ENCODE measurements at regions of chr1 and their contacts with region 1.

Region 1: DNA sequence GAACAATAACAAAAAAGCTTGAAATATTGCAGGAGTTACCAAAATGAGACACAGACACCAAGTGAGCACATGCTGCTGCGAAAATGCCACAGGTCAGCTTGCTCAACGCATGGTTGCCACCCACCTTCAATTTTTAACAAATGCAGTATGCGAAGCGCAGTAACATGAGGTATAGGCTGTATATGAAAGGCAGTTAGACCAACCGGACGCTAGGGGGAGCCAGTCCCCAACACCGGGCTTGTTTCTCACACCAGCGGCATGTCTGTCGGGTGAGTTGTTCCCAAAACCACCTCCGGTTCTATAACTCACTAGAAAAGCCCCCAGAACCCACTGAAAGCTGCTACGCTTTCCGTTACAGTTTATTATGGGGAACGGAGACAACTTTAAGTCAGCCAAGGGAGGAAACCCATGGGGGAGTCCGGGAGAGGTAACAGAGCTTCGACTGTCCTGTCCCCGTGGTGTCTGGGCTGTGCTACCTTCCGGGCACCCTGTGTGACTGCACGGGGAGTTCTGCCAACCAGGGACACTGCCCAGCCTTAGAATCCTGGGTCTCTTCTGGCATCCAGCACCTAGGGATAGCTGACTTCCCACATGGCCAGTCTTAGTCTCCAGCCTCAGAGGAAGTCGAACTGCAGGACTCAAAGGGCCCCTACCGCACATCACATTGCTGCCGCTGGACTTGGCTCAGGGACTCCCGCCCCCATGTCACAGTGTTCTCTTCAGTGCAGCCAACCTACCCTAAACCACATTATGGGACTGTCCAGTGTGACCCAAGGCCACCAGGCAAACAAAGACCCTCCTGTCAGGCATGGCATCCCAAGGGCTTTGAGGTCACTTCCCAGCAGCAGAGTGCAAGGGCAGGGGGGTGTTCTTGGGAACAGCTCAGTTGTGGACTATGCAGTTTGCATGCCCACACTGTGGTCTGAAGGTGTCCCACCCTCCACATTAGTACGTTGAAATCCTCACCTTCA is 14.0 kb downstream of the RNF187 start:
- DNase-seq: peak; percentile 72
- ATAC-seq: peak; percentile 96
- H3K4me3 Mint-ChIP-seq: peak overlapping the region; percentile 77
- H3K27ac Mint-ChIP-seq: peak overlapping the region; percentile 84
- H3K4me1 Mint-ChIP-seq: peaks cover 17% of the 10 kb centered on the region
- H3K27me3 Mint-ChIP-seq: peaks cover 9% of the 10 kb centered on the region
- CTCF ChIP-seq: peak; percentile 91

Region 2: DNA sequence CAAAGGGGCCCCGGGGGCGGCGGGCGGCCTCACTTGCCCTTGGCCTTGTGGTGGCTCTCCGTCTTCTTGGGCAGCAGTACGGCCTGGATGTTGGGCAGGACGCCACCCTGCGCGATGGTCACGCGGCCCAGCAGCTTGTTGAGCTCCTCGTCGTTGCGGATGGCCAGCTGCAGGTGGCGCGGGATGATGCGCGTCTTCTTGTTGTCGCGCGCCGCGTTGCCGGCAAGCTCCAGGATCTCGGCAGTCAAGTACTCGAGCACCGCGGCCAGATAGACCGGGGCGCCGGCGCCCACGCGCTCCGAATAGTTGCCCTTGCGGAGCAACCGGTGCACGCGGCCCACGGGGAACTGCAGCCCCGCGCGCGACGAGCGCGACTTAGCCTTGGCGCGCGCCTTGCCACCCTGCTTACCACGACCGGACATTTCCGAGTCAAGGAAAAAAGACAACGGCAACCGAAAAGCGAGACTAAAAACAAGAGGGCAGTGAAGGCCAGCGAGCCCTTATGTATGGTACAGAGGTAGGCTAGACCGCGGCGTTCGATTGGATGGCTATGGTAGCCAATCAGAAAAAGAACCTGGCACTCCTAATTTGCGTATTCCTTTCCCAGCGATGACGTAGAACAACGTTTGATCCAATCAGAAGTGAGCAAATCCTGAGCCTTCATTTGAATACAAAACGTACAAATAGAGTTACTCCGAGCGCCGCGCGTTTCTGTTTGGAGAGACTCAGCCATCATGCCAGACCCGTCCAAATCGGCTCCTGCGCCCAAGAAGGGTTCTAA is 43.6 kb before region 1 on chr1:
- CTCF ChIA-PET with region 1: no interaction called
- POLR2A ChIA-PET with region 1: interaction called, 6 read pairs
- intact Hi-C with region 1: loop called (anchors 2 kb)
- DNase-seq: peak; percentile 53
- ATAC-seq: peak; percentile 85
- H3K4me3 Mint-ChIP-seq: peak overlapping the region; percentile 89
- H3K27ac Mint-ChIP-seq: peak overlapping the region; percentile 89
- H3K4me1 Mint-ChIP-seq: peaks cover 25% of the 10 kb centered on the region
- H3K27me3 Mint-ChIP-seq: peaks cover 26% of the 10 kb centered on the region
- CTCF ChIP-seq: no peak

Region 3: DNA sequence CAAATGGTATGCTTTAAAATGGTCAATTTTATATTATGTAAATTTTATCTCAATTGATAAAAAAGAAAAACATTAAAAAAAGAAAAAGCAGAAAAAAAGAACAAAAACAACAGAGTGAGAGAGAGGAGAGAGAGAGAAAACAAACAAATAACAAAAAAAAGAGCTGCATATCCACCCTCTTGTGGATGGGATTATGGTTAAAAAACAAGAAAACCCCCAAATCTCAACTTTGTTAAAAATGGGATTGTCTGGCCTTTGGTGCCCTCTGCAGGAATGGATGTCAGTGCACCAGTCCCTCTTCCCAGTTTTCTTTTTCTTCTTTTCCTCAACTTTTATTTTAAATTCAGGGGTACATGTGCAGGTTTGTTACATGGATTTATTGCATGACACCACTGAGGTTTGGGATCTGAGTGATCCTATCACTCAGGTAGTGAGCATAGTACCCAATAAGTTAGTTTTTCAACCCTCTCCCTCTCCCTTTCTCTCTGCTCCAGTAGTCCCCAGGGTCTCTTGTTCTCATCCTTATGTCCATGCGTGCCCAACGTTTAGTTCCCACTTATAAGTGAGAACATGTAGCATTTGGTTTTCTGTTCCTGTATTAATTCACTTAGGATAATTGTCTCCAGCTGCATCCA is 14.1 kb after region 1 on chr1:
- CTCF ChIA-PET with region 1: interaction called, 29 read pairs
- POLR2A ChIA-PET with region 1: no interaction called
- intact Hi-C with region 1: loop called (anchors 1 kb)
- DNase-seq: no peak
- ATAC-seq: peak; percentile 45
- H3K4me3 Mint-ChIP-seq: no peak overlapping the region
- H3K27ac Mint-ChIP-seq: no peak overlapping the region
- H3K4me1 Mint-ChIP-seq: no peaks in the 10 kb centered on the region
- H3K27me3 Mint-ChIP-seq: peaks cover 18% of the 10 kb centered on the region
- CTCF ChIP-seq: no peak

Measured in activated B cell treated with CpG ODN at 0.5 μM for 24 hours (primary cell).